Heart right ventricle (tissue), 16 donors: ENCODE measurements at regions of chr19 and their contacts with region 1.

Region 1: GRCh38 chr19:344625-345319 is at the start of gene MIER2:
- DNase-seq: peak; percentile 82 to 90
- ATAC-seq: peak; percentile 95 to 97 (median 96)
- H3K4me3 ChIP-seq: peak within 1 kb of the TSS; percentile 78 to 94 (median 87)
- H3K27ac ChIP-seq: peak within 1 kb of the TSS; percentile 51 to 93 (median 86)
- H3K4me1 ChIP-seq: peaks cover 0 to 48% (median 30%) of the 10 kb centered on the region in 9 donors
- H3K27me3 ChIP-seq: peaks cover 0 to 8% (median 0%) of the 10 kb centered on the region in 7 donors
- CTCF ChIP-seq: no peak
- total RNA-seq, gene MIER2: 11.1 to 34.6 (median 16.3) TPM

Region 2: DNA sequence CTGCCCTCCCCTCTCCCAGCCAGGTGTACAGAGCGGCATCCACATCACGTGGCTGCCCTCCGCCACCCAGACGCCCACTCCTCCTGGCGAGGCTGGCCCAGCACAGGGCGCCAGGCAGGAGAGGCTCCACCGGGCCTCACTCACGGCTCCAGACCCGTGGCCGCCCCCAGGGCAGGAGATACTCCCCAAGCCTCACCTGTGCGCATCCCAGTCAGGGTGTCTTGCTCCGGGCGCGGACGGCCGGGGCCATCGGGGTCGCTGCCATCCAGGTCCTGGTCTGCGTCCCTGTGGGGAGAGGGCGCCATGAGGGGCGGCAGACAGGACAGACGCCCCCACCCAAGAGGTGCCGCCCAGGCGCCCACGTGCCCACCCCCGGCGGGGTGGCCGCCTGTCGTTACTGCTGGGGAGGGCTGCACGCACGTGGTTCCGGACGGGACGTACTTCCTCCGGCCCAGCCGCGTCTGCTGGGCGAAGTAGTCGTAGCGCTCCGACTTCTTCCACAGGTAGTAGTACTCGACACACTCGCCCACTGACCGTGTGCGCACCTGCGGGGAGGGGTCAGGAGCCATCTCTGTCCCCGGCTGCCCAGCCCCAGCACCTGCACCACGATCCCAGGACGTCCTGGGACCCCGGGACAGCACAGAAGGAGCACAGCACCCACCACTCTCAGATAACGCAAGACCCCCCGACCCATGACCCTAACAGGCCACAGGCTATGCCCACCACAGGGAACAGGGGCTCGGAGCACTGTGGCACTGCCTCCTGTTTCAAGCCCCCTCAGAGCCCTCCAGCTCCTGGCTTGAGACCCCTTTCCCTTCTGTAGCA is 36.2 kb before region 1 on chr19:
- intact Hi-C with region 1: loop called in 1 of 10 experiments (anchors 5 kb)
- DNase-seq: peak in 1 of 2 donors; percentile 2
- ATAC-seq: peak in 6 of 8 donors; percentile 8 to 33 (median 22)
- H3K4me3 ChIP-seq: peak overlapping the region; percentile 17 to 51 (median 42)
- H3K27ac ChIP-seq: peak overlapping the region in 9 of 10 donors; percentile 43 to 86 (median 73)
- H3K4me1 ChIP-seq: peaks cover 0 to 33% (median 0%) of the 10 kb centered on the region in 9 donors
- H3K27me3 ChIP-seq: no peaks in the 10 kb centered on the region
- CTCF ChIP-seq: no peak